T-cell (primary cell): ENCODE measurements at regions of chr4 and their contacts with region 1.

Region 1: DNA sequence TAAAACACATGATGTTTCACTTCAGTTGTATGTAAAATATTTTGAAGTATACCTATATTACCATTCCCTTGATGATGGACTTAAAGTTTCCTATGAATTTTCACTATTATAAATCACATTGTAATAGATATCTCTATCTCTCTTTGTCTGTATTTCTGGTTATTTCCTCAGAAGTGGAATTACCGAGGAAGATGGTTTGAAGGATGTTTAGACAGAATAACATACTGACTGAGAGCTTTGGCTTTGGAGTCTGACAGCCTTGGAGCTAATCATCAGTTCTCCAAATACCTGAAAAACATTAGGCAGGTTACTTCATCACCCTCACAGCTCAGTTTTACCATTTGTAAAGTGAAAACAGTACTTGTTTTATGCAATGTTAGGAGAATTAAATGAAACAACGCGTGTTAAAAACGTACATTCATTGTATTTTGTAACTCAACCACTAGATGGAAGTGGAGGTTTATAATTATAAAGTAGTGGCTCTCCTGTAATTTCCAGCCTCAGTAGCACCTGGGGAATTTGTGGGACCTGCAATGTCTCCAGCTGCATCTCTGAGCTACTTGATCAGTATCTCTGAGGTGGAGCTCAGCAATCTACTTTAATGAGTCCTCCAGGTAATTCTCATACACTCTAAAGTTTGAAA is 14.3 kb downstream of the JCHAIN start:
- DNase-seq: peak in 4 of 35 experiments; percentile 4 to 53 (median 12)
- ATAC-seq: peak in 3 of 4 experiments; percentile 46 to 66 (median 49)
- H3K4me3 ChIP-seq: no peak overlapping the region
- H3K4me3 Mint-ChIP-seq: no peak overlapping the region
- H3K27ac ChIP-seq: no peak overlapping the region
- H3K27ac Mint-ChIP-seq: no peak overlapping the region
- H3K4me1 ChIP-seq: no peaks in the 10 kb centered on the region
- H3K4me1 Mint-ChIP-seq: peaks cover 0 to 4% (median 4%) of the 10 kb centered on the region in 3 donors
- H3K27me3 ChIP-seq: no peaks in the 10 kb centered on the region
- H3K27me3 Mint-ChIP-seq: no peaks in the 10 kb centered on the region

Region 2: GRCh38 chr4:69787879-69788278 is 864.1 kb before region 1 on chr4:
- CTCF ChIA-PET with region 1: no interaction called
- POLR2A ChIA-PET with region 1: no interaction called
- DNase-seq: no peak
- ATAC-seq: no peak
- H3K4me3 ChIP-seq: no peak overlapping the region
- H3K4me3 Mint-ChIP-seq: no peak overlapping the region
- H3K27ac ChIP-seq: no peak overlapping the region
- H3K27ac Mint-ChIP-seq: no peak overlapping the region
- H3K4me1 ChIP-seq: no peaks in the 10 kb centered on the region
- H3K4me1 Mint-ChIP-seq: no peaks in the 10 kb centered on the region
- H3K27me3 ChIP-seq: no peaks in the 10 kb centered on the region
- H3K27me3 Mint-ChIP-seq: no peaks in the 10 kb centered on the region

Region 3: GRCh38 chr4:70667740-70668535 is 16.0 kb after region 1 on chr4:
- CTCF ChIA-PET with region 1: interaction called in 1 of 2 experiments, 3 read pairs
- POLR2A ChIA-PET with region 1: interaction called, 4 to 11 read pairs
- DNase-seq: no peak
- ATAC-seq: no peak
- H3K4me3 ChIP-seq: no peak overlapping the region
- H3K4me3 Mint-ChIP-seq: no peak overlapping the region
- H3K27ac ChIP-seq: no peak overlapping the region
- H3K27ac Mint-ChIP-seq: no peak overlapping the region
- H3K4me1 ChIP-seq: no peaks in the 10 kb centered on the region
- H3K4me1 Mint-ChIP-seq: peaks cover 0 to 11% (median 2%) of the 10 kb centered on the region in 3 donors
- H3K27me3 ChIP-seq: peaks cover 0 to 2% of the 10 kb centered on the region in 2 experiments
- H3K27me3 Mint-ChIP-seq: peaks cover 4 to 6% of the 10 kb centered on the region in 2 donors

Region 4: GRCh38 chr4:70704331-70705145 is 52.6 kb after region 1 on chr4:
- CTCF ChIA-PET with region 1: interaction called in 1 of 2 experiments, 11 read pairs
- POLR2A ChIA-PET with region 1: no interaction called
- DNase-seq: peak in 30 of 35 experiments; percentile 8 to 76 (median 38)
- ATAC-seq: peak; percentile 42 to 58 (median 47)
- H3K4me3 ChIP-seq: peak overlapping the region; percentile 55 to 62
- H3K4me3 Mint-ChIP-seq: peak overlapping the region; percentile 88 to 97 (median 93)
- H3K27ac ChIP-seq: peak overlapping the region; percentile 80
- H3K27ac Mint-ChIP-seq: peak overlapping the region; percentile 89 to 94
- H3K4me1 ChIP-seq: peaks cover 17 to 19% of the 10 kb centered on the region in 2 experiments
- H3K4me1 Mint-ChIP-seq: peaks cover 26 to 35% (median 27%) of the 10 kb centered on the region in 3 donors
- H3K27me3 ChIP-seq: no peaks in the 10 kb centered on the region
- H3K27me3 Mint-ChIP-seq: no peaks in the 10 kb centered on the region

Region 5: GRCh38 chr4:72301759-72302158 is 1649.8 kb after region 1 on chr4:
- CTCF ChIA-PET with region 1: interaction called, 3 to 10 read pairs
- POLR2A ChIA-PET with region 1: no interaction called
- DNase-seq: no peak
- ATAC-seq: no peak
- H3K4me3 ChIP-seq: no peak overlapping the region
- H3K4me3 Mint-ChIP-seq: no peak overlapping the region
- H3K27ac ChIP-seq: no peak overlapping the region
- H3K27ac Mint-ChIP-seq: no peak overlapping the region
- H3K4me1 ChIP-seq: no peaks in the 10 kb centered on the region
- H3K4me1 Mint-ChIP-seq: no peaks in the 10 kb centered on the region
- H3K27me3 ChIP-seq: no peaks in the 10 kb centered on the region
- H3K27me3 Mint-ChIP-seq: no peaks in the 10 kb centered on the region